ENCODE measurements at regions of chr18 and their contacts with region 1.

Region 1: DNA sequence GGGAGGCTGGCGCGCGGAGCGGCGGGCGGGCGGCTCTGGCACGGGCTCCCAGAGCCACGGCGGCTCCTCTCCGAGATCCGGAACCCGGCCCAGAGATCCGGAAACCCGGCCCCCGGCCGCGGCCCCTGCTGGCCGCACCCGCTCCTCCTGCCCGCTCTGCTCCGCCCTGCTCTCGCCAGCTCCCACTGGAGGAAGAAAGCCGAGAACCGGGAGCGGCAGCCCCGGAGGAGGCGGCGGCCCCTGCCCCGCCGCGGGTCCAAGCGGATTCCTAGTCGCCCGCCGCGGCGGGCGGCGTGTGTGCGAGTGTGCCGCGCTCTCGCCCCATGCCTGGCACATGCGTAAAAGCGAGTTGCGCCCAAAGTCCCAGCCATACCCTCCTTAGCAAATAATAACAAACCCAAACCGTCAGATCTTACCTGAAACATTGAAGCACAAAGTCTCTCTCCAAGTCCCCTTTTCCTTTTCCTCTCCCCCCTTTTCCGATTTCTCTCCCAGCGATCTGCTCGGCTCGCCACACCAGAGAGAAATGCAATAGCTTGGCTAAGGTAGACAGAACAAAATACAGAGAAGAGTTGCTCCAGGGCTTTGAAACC is 108.7 kb upstream of the KCTD1 start:
- DNase-seq: peak in 1 of 2 donors; percentile 18
- ATAC-seq: peak; percentile 70 to 75
- H3K4me3 ChIP-seq: peak overlapping the region; percentile 55 to 88 (median 61)
- H3K27ac ChIP-seq: peak overlapping the region; percentile 6 to 66 (median 35)
- H3K4me1 ChIP-seq: peaks cover 13 to 15% of the 10 kb centered on the region in 2 donors
- H3K27me3 ChIP-seq: peaks cover 19 to 60% (median 28%) of the 10 kb centered on the region in 3 donors
- CTCF ChIP-seq: peak in 1 of 5 experiments; percentile 36
- POLR2A ChIP-seq: no peak

Region 2: DNA sequence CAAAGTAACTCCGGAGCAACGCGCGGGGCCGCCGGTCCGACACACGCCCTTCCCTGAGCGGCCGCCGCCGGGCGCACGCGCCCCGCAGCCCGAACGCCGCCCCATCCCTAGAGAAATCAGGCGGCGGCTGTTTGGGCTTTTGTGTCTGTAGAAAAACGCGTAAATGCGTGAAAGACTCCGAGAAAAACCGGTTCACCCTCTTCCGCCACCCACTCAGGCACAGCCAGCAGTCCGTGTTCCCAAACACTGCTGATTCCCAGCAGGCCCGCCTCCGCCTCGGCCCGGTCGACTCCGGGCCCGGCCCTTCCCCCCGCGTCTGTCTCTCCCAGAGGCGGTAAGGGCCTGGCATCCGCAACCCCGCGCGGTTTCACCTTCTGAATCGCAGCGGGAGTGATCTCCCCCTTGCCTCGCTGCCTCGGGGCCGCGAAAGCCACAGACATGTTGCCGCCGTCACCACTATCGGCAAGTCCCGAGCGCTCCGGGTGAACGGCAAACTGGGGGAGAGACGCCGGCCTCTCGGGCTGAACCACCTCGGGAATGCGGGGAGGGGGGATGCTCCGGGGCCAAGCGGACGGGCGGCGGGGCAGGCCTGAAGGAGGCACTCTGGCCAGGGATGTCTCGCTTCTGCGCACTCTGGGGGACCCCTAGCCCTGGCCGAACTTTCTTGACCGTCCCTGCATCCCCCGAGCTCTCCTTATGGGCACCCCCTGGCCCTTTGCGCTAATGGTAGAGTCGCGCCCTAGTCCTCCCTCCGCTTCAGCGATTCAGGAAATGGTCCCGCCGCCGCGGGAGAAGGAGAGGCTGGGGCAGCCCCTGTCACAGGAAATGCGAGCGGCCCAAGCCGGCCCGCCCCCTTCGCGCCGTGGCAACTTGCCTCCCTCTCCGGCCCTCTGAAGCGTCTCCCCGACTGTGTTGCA is 566.7 kb before region 1 on chr18 and contains the start of gene SS18:
- in situ Hi-C with region 1: no loop called
- intact Hi-C with region 1: loop called (anchors 10 kb)
- DNase-seq: peak; percentile 81 to 89
- ATAC-seq: peak; percentile 91 to 93
- H3K4me3 ChIP-seq: peak within 1 kb of the TSS; percentile 79 to 94 (median 85)
- H3K27ac ChIP-seq: peak within 1 kb of the TSS; percentile 89 to 92 (median 91)
- H3K4me1 ChIP-seq: peaks cover 19 to 21% of the 10 kb centered on the region in 2 donors
- H3K27me3 ChIP-seq: no peaks in the 10 kb centered on the region
- CTCF ChIP-seq: peak in 1 of 5 experiments; percentile 9
- POLR2A ChIP-seq: peak; percentile 48 to 54
- total RNA-seq, gene SS18: 17.3 to 25.7 (median 21.6) TPM

Region 3: GRCh38 chr18:26307189-26307773 is 349.8 kb before region 1 on chr18:
- in situ Hi-C with region 1: loop called in 1 of 4 experiments (anchors 10 kb)
- intact Hi-C with region 1: loop called (anchors 5 kb)
- DNase-seq: no peak
- ATAC-seq: peak in 1 of 2 donors; percentile 66
- H3K4me3 ChIP-seq: no peak overlapping the region
- H3K27ac ChIP-seq: no peak overlapping the region
- H3K4me1 ChIP-seq: no peaks in the 10 kb centered on the region
- H3K27me3 ChIP-seq: no peaks in the 10 kb centered on the region
- CTCF ChIP-seq: peak in 3 of 5 experiments; percentile 13 to 49 (median 35)
- POLR2A ChIP-seq: no peak

Region 4: GRCh38 chr18:26383454-26384270 is 273.4 kb before region 1 on chr18:
- in situ Hi-C with region 1: loop called in 1 of 4 experiments (anchors 10 kb)
- intact Hi-C with region 1: no loop called
- DNase-seq: no peak
- ATAC-seq: peak in 1 of 2 donors; percentile 86
- H3K4me3 ChIP-seq: no peak overlapping the region
- H3K27ac ChIP-seq: no peak overlapping the region
- H3K4me1 ChIP-seq: no peaks in the 10 kb centered on the region
- H3K27me3 ChIP-seq: no peaks in the 10 kb centered on the region
- CTCF ChIP-seq: peak in 4 of 5 experiments; percentile 50 to 74 (median 61)
- POLR2A ChIP-seq: no peak

Region 5: GRCh38 chr18:26548429-26549262 is 108.4 kb before region 1 on chr18 and contains the start of gene KCTD1:
- in situ Hi-C with region 1: no loop called
- intact Hi-C with region 1: loop called (anchors 5 kb)
- DNase-seq: peak; percentile 73 to 83
- ATAC-seq: peak; percentile 86 to 87
- H3K4me3 ChIP-seq: peak within 1 kb of the TSS; percentile 69 to 83 (median 78)
- H3K27ac ChIP-seq: peak within 1 kb of the TSS; percentile 75 to 85 (median 82)
- H3K4me1 ChIP-seq: peaks cover 36 to 50% of the 10 kb centered on the region in 2 donors
- H3K27me3 ChIP-seq: peaks cover 6 to 28% (median 19%) of the 10 kb centered on the region in 3 donors
- CTCF ChIP-seq: no peak
- POLR2A ChIP-seq: peak in 1 of 2 donors; percentile 11
- total RNA-seq, gene KCTD1: 4.7 to 6.0 (median 5.2) TPM

Region 6: DNA sequence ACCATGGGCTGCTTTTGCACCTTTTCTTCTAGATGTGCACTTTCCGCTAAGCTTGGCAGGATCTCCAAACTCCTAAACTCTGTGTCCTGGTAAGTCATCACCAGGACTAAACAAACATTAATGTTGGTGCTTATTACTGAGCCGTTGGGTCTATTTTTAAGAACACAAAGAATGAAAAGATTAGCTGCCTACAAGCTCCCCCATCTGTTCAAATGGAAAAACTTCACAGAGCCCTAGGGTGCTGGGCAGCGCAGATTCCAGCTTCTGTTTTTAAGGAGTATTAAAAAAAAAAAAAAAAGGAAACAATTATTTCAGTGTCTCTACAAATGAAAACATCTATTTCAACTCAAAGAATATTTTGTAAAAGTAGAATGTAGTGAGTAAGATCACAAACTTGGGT is 306.3 kb after region 1 on chr18:
- in situ Hi-C with region 1: no loop called
- intact Hi-C with region 1: loop called (anchors 5 kb)
- DNase-seq: no peak
- ATAC-seq: peak in 1 of 2 donors; percentile 30
- H3K4me3 ChIP-seq: no peak overlapping the region
- H3K27ac ChIP-seq: no peak overlapping the region
- H3K4me1 ChIP-seq: peaks cover 0 to 6% of the 10 kb centered on the region in 2 donors
- H3K27me3 ChIP-seq: no peaks in the 10 kb centered on the region
- CTCF ChIP-seq: peak in 2 of 5 experiments; percentile 14 to 31
- POLR2A ChIP-seq: no peak